CD8-positive, alpha-beta T cell (primary cell): ENCODE measurements at regions of chr6 and their contacts with region 1.

Region 1: GRCh38 chr6:145252737-145253136 is 482.6 kb downstream of the EPM2A start:
- DNase-seq: no peak
- ATAC-seq: no peak
- H3K4me3 ChIP-seq: no peak overlapping the region
- H3K4me3 Mint-ChIP-seq: no peak overlapping the region
- H3K27ac ChIP-seq: no peak overlapping the region
- H3K27ac Mint-ChIP-seq: no peak overlapping the region
- H3K4me1 ChIP-seq: no peaks in the 10 kb centered on the region
- H3K4me1 Mint-ChIP-seq: no peaks in the 10 kb centered on the region
- H3K27me3 ChIP-seq: no peaks in the 10 kb centered on the region
- H3K27me3 Mint-ChIP-seq: no peaks in the 10 kb centered on the region
- CTCF ChIP-seq: no peak

Region 2: GRCh38 chr6:143478479-143479062 is 1774.2 kb before region 1 on chr6:
- CTCF ChIA-PET with region 1: no interaction called
- POLR2A ChIA-PET with region 1: no interaction called
- intact Hi-C with region 1: no loop called
- DNase-seq: no peak
- ATAC-seq: no peak
- H3K4me3 ChIP-seq: no peak overlapping the region
- H3K4me3 Mint-ChIP-seq: no peak overlapping the region
- H3K27ac ChIP-seq: no peak overlapping the region
- H3K27ac Mint-ChIP-seq: no peak overlapping the region
- H3K4me1 ChIP-seq: no peaks in the 10 kb centered on the region
- H3K4me1 Mint-ChIP-seq: no peaks in the 10 kb centered on the region
- H3K27me3 ChIP-seq: no peaks in the 10 kb centered on the region
- H3K27me3 Mint-ChIP-seq: no peaks in the 10 kb centered on the region
- CTCF ChIP-seq: no peak

Region 3: GRCh38 chr6:145241721-145242120 is 11.0 kb before region 1 on chr6:
- CTCF ChIA-PET with region 1: no interaction called
- POLR2A ChIA-PET with region 1: no interaction called
- intact Hi-C with region 1: loop called in 1 of 2 experiments (anchors 1 kb)
- DNase-seq: no peak
- ATAC-seq: no peak
- H3K4me3 ChIP-seq: no peak overlapping the region
- H3K4me3 Mint-ChIP-seq: no peak overlapping the region
- H3K27ac ChIP-seq: no peak overlapping the region
- H3K27ac Mint-ChIP-seq: no peak overlapping the region
- H3K4me1 ChIP-seq: no peaks in the 10 kb centered on the region
- H3K4me1 Mint-ChIP-seq: no peaks in the 10 kb centered on the region
- H3K27me3 ChIP-seq: no peaks in the 10 kb centered on the region
- H3K27me3 Mint-ChIP-seq: peaks cover 10% of the 10 kb centered on the region
- CTCF ChIP-seq: no peak